AG04449 (cell line): ENCODE measurements at regions of chr22 and their contacts with region 1.

Region 1: GRCh38 chr22:36977947-36978660 is 41.1 kb downstream of the TST start:
- DNase-seq: peak; percentile 12
- H3K4me3 ChIP-seq: peak overlapping the region; percentile 51
- CTCF ChIP-seq: peak; percentile 97

Region 2: GRCh38 chr22:36781656-36782627 is 196.2 kb before region 1 on chr22:
- CTCF ChIA-PET with region 1: interaction called, 23 read pairs
- POLR2A ChIA-PET with region 1: interaction called, 3 read pairs
- DNase-seq: no peak
- H3K4me3 ChIP-seq: no peak overlapping the region
- CTCF ChIP-seq: peak; percentile 96

Region 3: GRCh38 chr22:36940676-36941075 is 37.4 kb before region 1 on chr22:
- CTCF ChIA-PET with region 1: no interaction called
- POLR2A ChIA-PET with region 1: no interaction called
- DNase-seq: no peak
- H3K4me3 ChIP-seq: no peak overlapping the region
- CTCF ChIP-seq: no peak

Region 4: GRCh38 chr22:36961621-36962020 is 16.5 kb before region 1 on chr22:
- CTCF ChIA-PET with region 1: interaction called, 72 read pairs
- POLR2A ChIA-PET with region 1: no interaction called
- DNase-seq: no peak
- H3K4me3 ChIP-seq: no peak overlapping the region
- CTCF ChIP-seq: no peak

Region 5: GRCh38 chr22:36991206-36991605 is 13.1 kb after region 1 on chr22:
- CTCF ChIA-PET with region 1: interaction called, 15 read pairs
- POLR2A ChIA-PET with region 1: no interaction called
- DNase-seq: no peak
- H3K4me3 ChIP-seq: no peak overlapping the region
- CTCF ChIP-seq: no peak